ENCODE measurements at regions of chr10 and their contacts with region 1.

Region 1: DNA sequence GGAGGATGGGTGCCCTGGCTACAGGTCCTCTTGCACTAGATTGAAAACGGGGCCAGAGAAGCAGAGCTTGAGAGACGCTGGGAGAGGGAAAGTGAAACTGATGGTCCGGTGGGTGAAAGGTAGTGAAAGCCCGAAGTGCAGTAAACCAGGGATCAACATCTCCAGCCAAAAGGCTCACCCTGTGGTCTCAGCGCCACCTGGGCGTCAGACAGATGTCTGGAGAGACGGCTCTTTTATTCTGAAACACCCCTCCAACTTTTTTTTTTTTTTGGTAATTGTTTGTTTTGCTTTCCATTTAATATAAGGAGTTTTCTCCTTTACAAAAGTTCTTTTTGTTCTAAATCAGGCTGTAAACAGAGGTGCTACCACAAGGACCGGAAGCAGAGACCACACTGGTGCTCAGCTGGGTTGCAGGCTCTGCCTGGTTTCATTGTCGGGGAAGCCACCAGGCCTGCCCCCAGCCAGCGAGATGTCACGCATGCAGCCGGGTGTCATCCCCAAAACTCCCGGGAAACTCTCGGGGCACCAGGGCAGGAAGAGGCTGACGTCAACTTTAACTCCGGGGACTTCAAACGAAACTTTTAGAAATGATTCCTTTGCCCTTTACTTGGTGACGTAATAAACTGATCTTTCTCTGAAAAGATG is 11.2 kb downstream of the IL2RA start:
- DNase-seq: peak; percentile 99
- H3K4me3 Mint-ChIP-seq: peak overlapping the region; percentile 80
- H3K27ac Mint-ChIP-seq: peak overlapping the region; percentile 98
- H3K4me1 Mint-ChIP-seq: peaks cover 85% of the 10 kb centered on the region
- H3K27me3 Mint-ChIP-seq: no peaks in the 10 kb centered on the region

Region 2: GRCh38 chr10:5813287-5814109 is 237.4 kb before region 1 on chr10 and contains the start of gene GDI2:
- CTCF ChIA-PET with region 1: no interaction called
- intact Hi-C with region 1: loop called (anchors 2 kb)
- DNase-seq: peak; percentile 98
- H3K4me3 Mint-ChIP-seq: peak within 1 kb of the TSS; percentile 84
- H3K27ac Mint-ChIP-seq: peak within 1 kb of the TSS; percentile 90
- H3K4me1 Mint-ChIP-seq: peaks cover 66% of the 10 kb centered on the region
- H3K27me3 Mint-ChIP-seq: no peaks in the 10 kb centered on the region
- total RNA-seq, gene GDI2: 277 to 288 TPM

Region 3: DNA sequence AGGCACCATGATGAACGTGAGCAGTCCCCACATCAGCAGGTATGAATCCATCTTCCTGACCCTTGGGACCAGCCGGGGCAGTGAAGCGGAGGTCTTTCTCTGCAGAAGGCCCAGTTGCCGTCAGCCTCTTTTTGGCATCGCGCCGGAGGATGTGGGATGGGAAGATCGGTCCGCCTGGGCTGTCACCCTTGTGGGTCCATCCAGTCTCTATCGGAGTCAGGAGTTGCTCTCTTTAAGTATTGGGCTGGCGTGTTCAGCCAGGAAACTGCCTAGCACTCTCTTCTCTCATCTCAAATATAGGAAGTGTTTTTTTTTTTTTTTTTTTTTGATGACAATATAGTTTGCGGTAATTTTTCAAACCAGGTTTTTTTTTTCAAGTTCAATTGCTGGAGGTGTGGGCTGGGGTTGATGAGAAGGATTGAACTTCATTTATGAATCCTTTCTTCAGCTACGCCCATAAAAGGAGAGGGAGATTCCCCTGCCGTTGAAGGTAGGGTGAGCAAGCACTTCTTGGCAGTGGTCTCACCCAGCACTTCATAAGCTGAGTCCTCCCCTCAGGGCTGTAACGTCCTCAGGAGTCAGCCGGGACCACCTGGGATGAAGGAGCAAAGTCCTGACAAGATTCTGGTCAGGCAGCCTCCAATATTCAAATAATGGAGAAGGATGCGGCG is 11.3 kb after region 1 on chr10 and contains the start of gene IL2RA:
- CTCF ChIA-PET with region 1: interaction called, 12 read pairs
- intact Hi-C with region 1: loop called (anchors 1 kb)
- DNase-seq: peak; percentile 83
- H3K4me3 Mint-ChIP-seq: peak within 1 kb of the TSS; percentile 86
- H3K27ac Mint-ChIP-seq: peak within 1 kb of the TSS; percentile 94
- H3K4me1 Mint-ChIP-seq: peaks cover 46% of the 10 kb centered on the region
- H3K27me3 Mint-ChIP-seq: no peaks in the 10 kb centered on the region
- total RNA-seq, gene IL2RA: 443 to 471 TPM

Region 4: GRCh38 chr10:6120691-6121090 is 69.8 kb after region 1 on chr10:
- CTCF ChIA-PET with region 1: no interaction called
- intact Hi-C with region 1: loop called (anchors 1 kb)
- DNase-seq: no peak
- H3K4me3 Mint-ChIP-seq: no peak overlapping the region
- H3K27ac Mint-ChIP-seq: no peak overlapping the region
- H3K4me1 Mint-ChIP-seq: peaks cover 31% of the 10 kb centered on the region
- H3K27me3 Mint-ChIP-seq: peaks cover 3% of the 10 kb centered on the region

Region 5: GRCh38 chr10:6348096-6348874 is 297.4 kb after region 1 on chr10:
- CTCF ChIA-PET with region 1: no interaction called
- intact Hi-C with region 1: loop called (anchors 1 kb)
- DNase-seq: peak; percentile 94
- H3K4me3 Mint-ChIP-seq: peak overlapping the region; percentile 63
- H3K27ac Mint-ChIP-seq: peak overlapping the region; percentile 96
- H3K4me1 Mint-ChIP-seq: peaks cover 58% of the 10 kb centered on the region
- H3K27me3 Mint-ChIP-seq: no peaks in the 10 kb centered on the region

Region 6: DNA sequence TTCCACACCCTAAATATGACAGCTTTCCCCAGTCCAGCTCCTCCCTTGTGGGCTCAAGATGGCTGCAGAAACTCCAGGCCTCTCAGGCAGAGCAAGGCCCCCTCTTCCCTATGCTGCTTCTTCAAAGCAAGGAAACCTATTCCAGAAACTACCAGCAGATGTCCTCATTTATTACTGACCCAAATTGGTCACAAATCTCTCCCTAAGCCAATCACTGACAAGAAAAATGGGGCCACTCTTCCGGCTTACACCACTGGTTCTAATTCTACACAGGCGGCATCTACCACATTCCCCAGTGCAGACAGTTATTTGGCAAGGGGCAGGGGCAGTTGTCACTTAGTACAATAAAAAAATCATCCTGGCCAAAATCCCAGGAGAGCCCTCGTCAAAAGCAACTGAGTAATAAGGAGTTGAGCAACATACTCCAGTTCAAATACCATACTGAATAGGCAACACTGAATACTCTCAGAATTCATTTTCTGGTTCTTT is 1209.5 kb after region 1 on chr10:
- CTCF ChIA-PET with region 1: no interaction called
- intact Hi-C with region 1: loop called (anchors 10 kb)
- DNase-seq: peak; percentile 20
- H3K4me3 Mint-ChIP-seq: no peak overlapping the region
- H3K27ac Mint-ChIP-seq: peak overlapping the region; percentile 21
- H3K4me1 Mint-ChIP-seq: peaks cover 62% of the 10 kb centered on the region
- H3K27me3 Mint-ChIP-seq: no peaks in the 10 kb centered on the region

Measured in activated naive CD4-positive, alpha-beta T cell treated with anti-CD3 and anti-CD28 coated beads for 36 hours (primary cell).